Dorsolateral prefrontal cortex (tissue), 120 donors: ENCODE measurements at regions of chr19 and their contacts with region 1.

Region 1: GRCh38 chr19:39502640-39503417 is 4.1 kb downstream of the DLL3 start:
- DNase-seq: peak in 1 of 10 donors; percentile 46
- H3K4me3 ChIP-seq: peak overlapping the region in 4 of 59 donors; percentile 1 to 18 (median 10)
- H3K27ac ChIP-seq: no peak overlapping the region
- H3K27me3 ChIP-seq: peaks cover 0 to 96% (median 62%) of the 10 kb centered on the region in 45 donors
- CTCF ChIP-seq: peak in 51 of 56 donors; percentile 13 to 77 (median 53)

Region 2: GRCh38 chr19:39752390-39752789 is 249.6 kb after region 1 on chr19:
- intact Hi-C with region 1: loop called in 1 of 2 experiments (anchors 5 kb)
- DNase-seq: no peak
- H3K4me3 ChIP-seq: no peak overlapping the region
- H3K27ac ChIP-seq: no peak overlapping the region
- H3K27me3 ChIP-seq: peaks cover 0 to 8% (median 0%) of the 10 kb centered on the region in 45 donors
- CTCF ChIP-seq: no peak